CD8-positive, alpha-beta T cell (primary cell): ENCODE measurements at regions of chr14 and their contacts with region 1.

Region 1: GRCh38 chr14:60091550-60092530 is at the start of gene PCNX4:
- DNase-seq: peak; percentile 88 to 99 (median 94)
- ATAC-seq: peak; percentile 91
- H3K4me3 ChIP-seq: peak within 1 kb of the TSS; percentile 68 to 82
- H3K4me3 Mint-ChIP-seq: peak within 1 kb of the TSS; percentile 94
- H3K27ac ChIP-seq: peak within 1 kb of the TSS; percentile 84 to 97
- H3K27ac Mint-ChIP-seq: peak within 1 kb of the TSS; percentile 99
- H3K4me1 ChIP-seq: peaks cover 24% of the 10 kb centered on the region
- H3K4me1 Mint-ChIP-seq: peaks cover 46% of the 10 kb centered on the region
- H3K27me3 ChIP-seq: no peaks in the 10 kb centered on the region
- H3K27me3 Mint-ChIP-seq: no peaks in the 10 kb centered on the region
- CTCF ChIP-seq: no peak
- total RNA-seq, gene PCNX4: 16.3 to 25.1 TPM

Region 2: DNA sequence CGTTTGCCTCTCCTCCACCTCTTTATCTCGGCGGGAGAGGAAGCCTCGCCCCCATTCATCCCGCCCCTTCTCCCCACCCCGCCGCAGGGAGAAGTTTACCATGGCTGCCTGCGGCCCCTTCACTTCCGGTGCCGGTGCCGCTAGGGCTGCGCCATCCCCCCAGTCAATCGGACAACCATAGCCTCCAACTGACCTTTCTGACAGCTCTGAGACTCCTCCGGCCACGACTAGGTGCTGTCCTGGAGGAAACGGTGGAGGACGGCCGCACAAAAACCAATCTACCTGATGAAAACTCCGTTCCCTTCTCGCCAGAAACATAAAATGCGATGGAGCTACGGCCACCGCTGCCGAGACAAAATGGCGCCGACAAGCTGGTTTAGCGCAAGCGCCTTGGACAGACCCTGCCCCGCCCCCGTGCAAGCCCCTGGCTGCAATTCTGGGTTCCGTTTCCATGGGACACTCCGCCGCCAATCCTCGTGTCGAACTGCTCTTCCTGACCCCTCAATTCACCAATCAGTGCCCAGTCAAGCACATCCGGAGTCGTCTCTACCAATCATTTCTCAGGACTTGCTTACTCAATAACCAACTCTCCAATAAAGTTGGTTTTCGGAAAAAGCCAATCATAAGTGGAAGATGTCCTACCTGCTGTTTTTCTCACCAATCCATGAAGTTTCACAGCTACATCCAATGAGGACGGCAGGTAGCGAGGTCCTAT is 1793.9 kb before region 1 on chr14:
- CTCF ChIA-PET with region 1: no interaction called
- POLR2A ChIA-PET with region 1: no interaction called
- intact Hi-C with region 1: loop called in 1 of 2 experiments (anchors 10 kb)
- DNase-seq: peak; percentile 96 to 100 (median 97)
- ATAC-seq: peak; percentile 85
- H3K4me3 ChIP-seq: peak overlapping the region; percentile 81 to 85
- H3K4me3 Mint-ChIP-seq: no peak overlapping the region
- H3K27ac ChIP-seq: peak overlapping the region; percentile 94 to 97
- H3K27ac Mint-ChIP-seq: no peak overlapping the region
- H3K4me1 ChIP-seq: peaks cover 40% of the 10 kb centered on the region
- H3K4me1 Mint-ChIP-seq: peaks cover 61% of the 10 kb centered on the region
- H3K27me3 ChIP-seq: no peaks in the 10 kb centered on the region
- H3K27me3 Mint-ChIP-seq: no peaks in the 10 kb centered on the region
- CTCF ChIP-seq: no peak

Region 3: DNA sequence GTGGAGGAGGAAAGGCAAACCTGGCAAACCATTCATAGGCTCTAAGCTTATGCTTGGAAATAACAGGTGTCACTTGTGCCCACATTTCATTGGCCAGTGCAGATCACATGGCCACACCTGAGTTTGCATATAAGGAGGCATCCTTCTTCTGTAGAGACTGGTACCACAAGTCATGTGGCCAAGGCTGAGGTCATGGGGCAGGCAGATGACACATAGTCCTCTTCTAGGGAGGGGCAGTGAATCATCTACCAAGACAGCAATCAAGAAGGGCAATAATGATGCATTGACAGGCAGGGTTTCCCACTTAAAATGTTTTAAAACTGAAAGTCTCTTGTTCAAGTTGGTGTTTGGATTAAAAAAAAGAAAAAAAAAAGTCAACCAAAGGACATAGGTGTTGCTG is 826.0 kb before region 1 on chr14:
- CTCF ChIA-PET with region 1: no interaction called
- POLR2A ChIA-PET with region 1: no interaction called
- intact Hi-C with region 1: no loop called
- DNase-seq: no peak
- ATAC-seq: no peak
- H3K4me3 ChIP-seq: no peak overlapping the region
- H3K4me3 Mint-ChIP-seq: no peak overlapping the region
- H3K27ac ChIP-seq: no peak overlapping the region
- H3K27ac Mint-ChIP-seq: no peak overlapping the region
- H3K4me1 ChIP-seq: no peaks in the 10 kb centered on the region
- H3K4me1 Mint-ChIP-seq: no peaks in the 10 kb centered on the region
- H3K27me3 ChIP-seq: no peaks in the 10 kb centered on the region
- H3K27me3 Mint-ChIP-seq: no peaks in the 10 kb centered on the region
- CTCF ChIP-seq: no peak

Region 4: DNA sequence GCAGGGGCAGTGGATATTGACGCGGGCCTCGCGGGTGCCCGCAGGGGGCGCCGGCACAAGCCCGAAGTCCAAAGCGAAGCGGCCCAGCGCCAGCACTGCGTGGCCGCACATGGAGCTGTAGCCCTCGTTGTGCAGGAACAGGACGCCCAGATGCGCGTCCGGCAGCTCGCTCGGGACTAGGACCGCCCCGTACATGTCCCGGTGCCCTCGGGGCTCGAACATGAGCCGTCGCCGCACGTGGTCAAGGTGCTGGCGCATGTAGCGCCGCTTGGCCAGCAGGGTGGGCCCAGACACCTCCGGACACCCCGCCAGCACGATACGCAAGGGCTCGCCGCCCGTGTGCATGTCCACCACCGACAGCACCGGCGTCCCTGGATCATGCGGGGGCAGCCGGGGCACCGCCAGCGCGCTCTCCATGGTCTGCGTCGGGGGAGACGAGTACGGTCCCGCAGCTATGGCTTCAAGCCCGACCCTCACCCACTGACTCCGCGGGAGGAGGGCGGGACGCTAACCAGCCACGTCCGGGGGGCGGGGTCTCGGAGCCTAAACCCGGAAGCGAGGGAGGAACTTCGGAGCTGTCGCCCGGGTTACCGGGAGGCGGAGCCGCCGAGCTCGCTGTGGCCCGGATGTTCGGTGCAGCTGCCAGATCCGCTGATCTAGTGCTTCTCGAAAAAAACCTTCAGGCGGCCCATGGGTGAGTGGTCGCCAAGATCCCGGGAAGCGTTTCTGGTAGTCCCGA is 607.8 kb before region 1 on chr14 and contains the starts of genes JKAMP and L3HYPDH:
- CTCF ChIA-PET with region 1: no interaction called
- POLR2A ChIA-PET with region 1: no interaction called
- intact Hi-C with region 1: loop called in 1 of 2 experiments (anchors 1 kb)
- DNase-seq: peak; percentile 93 to 99 (median 97)
- ATAC-seq: peak; percentile 95
- H3K4me3 ChIP-seq: peak within 1 kb of the TSS; percentile 94 to 99
- H3K4me3 Mint-ChIP-seq: peak within 1 kb of the TSS; percentile 96
- H3K27ac ChIP-seq: peak within 1 kb of the TSS; percentile 77 to 89
- H3K27ac Mint-ChIP-seq: peak within 1 kb of the TSS; percentile 88
- H3K4me1 ChIP-seq: peaks cover 46% of the 10 kb centered on the region
- H3K4me1 Mint-ChIP-seq: peaks cover 76% of the 10 kb centered on the region
- H3K27me3 ChIP-seq: no peaks in the 10 kb centered on the region
- H3K27me3 Mint-ChIP-seq: no peaks in the 10 kb centered on the region
- CTCF ChIP-seq: no peak
- total RNA-seq, gene JKAMP: 9.1 to 10.5 TPM
- total RNA-seq, gene L3HYPDH: 8.4 to 8.7 TPM

Region 5: GRCh38 chr14:60079724-60080123 is 12.1 kb before region 1 on chr14:
- CTCF ChIA-PET with region 1: no interaction called
- POLR2A ChIA-PET with region 1: no interaction called
- intact Hi-C with region 1: no loop called
- DNase-seq: no peak
- ATAC-seq: no peak
- H3K4me3 ChIP-seq: no peak overlapping the region
- H3K4me3 Mint-ChIP-seq: no peak overlapping the region
- H3K27ac ChIP-seq: no peak overlapping the region
- H3K27ac Mint-ChIP-seq: no peak overlapping the region
- H3K4me1 ChIP-seq: no peaks in the 10 kb centered on the region
- H3K4me1 Mint-ChIP-seq: peaks cover 3% of the 10 kb centered on the region
- H3K27me3 ChIP-seq: no peaks in the 10 kb centered on the region
- H3K27me3 Mint-ChIP-seq: no peaks in the 10 kb centered on the region
- CTCF ChIP-seq: no peak

Region 6: DNA sequence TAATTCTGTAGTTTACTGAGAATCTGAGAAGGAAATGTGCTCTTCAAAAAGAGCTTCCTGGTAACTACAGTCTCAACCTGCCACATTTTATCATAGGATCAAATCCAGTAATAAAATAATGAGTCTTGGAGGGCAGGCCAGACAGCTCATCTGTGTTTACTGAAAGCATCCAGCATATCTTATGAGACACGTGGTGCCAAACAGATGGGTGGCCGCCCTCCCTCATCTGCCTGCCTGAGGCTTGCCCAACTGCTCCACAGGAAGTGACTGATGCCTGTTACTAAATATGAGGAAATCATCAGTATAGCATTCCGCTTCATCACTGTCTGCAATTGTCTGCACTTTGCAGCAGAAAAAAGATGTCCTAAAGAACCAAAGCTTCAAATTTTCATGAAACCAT is 59.9 kb after region 1 on chr14:
- CTCF ChIA-PET with region 1: interaction called, 3 read pairs
- POLR2A ChIA-PET with region 1: interaction called, 7 read pairs
- intact Hi-C with region 1: loop called in 1 of 2 experiments (anchors 2 kb)
- DNase-seq: peak; percentile 31 to 87 (median 74)
- ATAC-seq: peak; percentile 97
- H3K4me3 ChIP-seq: no peak overlapping the region
- H3K4me3 Mint-ChIP-seq: no peak overlapping the region
- H3K27ac ChIP-seq: peak overlapping the region; percentile 28 to 87
- H3K27ac Mint-ChIP-seq: peak overlapping the region; percentile 93
- H3K4me1 ChIP-seq: peaks cover 39% of the 10 kb centered on the region
- H3K4me1 Mint-ChIP-seq: peaks cover 54% of the 10 kb centered on the region
- H3K27me3 ChIP-seq: no peaks in the 10 kb centered on the region
- H3K27me3 Mint-ChIP-seq: no peaks in the 10 kb centered on the region
- CTCF ChIP-seq: no peak

Region 7: DNA sequence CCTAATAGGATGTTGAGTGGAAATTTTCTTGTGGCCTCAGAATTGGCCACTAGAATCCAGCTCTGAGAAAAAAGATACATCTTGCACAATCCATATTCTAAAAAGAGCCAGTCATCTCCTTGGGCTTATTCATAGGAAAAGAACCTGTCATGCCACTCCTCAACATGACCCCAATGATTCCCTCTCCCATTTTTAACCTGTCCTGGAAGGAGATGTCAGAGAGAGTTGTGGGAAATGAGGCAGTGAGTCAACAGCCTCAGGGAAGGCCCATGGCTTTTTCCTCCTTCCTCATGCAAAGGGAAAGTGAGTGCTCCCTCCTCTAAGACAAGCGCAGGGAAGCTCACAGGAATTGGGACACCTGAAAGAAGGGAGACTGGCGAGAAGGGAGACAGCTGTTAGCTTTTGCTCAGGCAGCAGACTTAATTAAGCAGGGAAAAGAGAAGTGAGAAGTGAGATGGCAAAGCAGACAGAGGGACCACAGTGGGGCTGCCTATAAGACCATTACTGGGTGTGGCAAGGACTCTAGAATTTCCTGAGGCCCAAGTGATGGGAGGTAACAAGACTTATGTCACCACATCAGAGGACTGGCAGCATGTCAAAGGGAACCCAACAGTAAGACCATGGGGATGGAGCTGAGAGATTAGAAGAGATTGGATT is 83.5 kb after region 1 on chr14:
- CTCF ChIA-PET with region 1: no interaction called
- POLR2A ChIA-PET with region 1: no interaction called
- intact Hi-C with region 1: no loop called
- DNase-seq: no peak
- ATAC-seq: no peak
- H3K4me3 ChIP-seq: no peak overlapping the region
- H3K4me3 Mint-ChIP-seq: no peak overlapping the region
- H3K27ac ChIP-seq: no peak overlapping the region
- H3K27ac Mint-ChIP-seq: no peak overlapping the region
- H3K4me1 ChIP-seq: no peaks in the 10 kb centered on the region
- H3K4me1 Mint-ChIP-seq: no peaks in the 10 kb centered on the region
- H3K27me3 ChIP-seq: peaks cover 0 to 2% of the 10 kb centered on the region in 2 experiments
- H3K27me3 Mint-ChIP-seq: peaks cover 6% of the 10 kb centered on the region
- CTCF ChIP-seq: no peak

Region 8: DNA sequence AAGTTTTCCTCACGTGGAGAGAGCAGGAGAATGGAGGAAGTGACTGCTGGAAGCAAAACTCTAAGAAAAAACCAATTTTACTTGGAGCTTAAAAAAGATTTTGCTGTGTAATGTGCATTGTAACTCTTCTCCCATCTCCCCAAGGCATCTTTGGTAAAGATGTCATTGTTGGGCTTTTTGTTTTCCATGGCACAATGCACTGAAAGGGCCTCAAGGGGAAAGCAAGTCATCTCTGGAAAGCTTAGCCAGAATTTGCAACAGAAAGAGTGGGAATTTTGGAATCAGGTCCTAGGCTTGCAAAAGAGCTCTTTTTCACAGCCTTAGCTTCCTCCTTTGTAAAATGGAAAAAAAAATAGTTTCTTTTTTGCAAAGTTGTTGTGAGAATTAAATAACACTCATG is 149.3 kb after region 1 on chr14:
- CTCF ChIA-PET with region 1: no interaction called
- POLR2A ChIA-PET with region 1: no interaction called
- intact Hi-C with region 1: no loop called
- DNase-seq: no peak
- ATAC-seq: no peak
- H3K4me3 ChIP-seq: no peak overlapping the region
- H3K4me3 Mint-ChIP-seq: no peak overlapping the region
- H3K27ac ChIP-seq: no peak overlapping the region
- H3K27ac Mint-ChIP-seq: no peak overlapping the region
- H3K4me1 ChIP-seq: no peaks in the 10 kb centered on the region
- H3K4me1 Mint-ChIP-seq: peaks cover 5% of the 10 kb centered on the region
- H3K27me3 ChIP-seq: no peaks in the 10 kb centered on the region
- H3K27me3 Mint-ChIP-seq: no peaks in the 10 kb centered on the region
- CTCF ChIP-seq: no peak

Region 9: GRCh38 chr14:60331201-60332045 is 239.6 kb after region 1 on chr14:
- CTCF ChIA-PET with region 1: no interaction called
- POLR2A ChIA-PET with region 1: no interaction called
- intact Hi-C with region 1: loop called in 1 of 2 experiments (anchors 10 kb)
- DNase-seq: peak; percentile 51 to 86 (median 80)
- ATAC-seq: peak; percentile 80
- H3K4me3 ChIP-seq: peak overlapping the region; percentile 52 to 55
- H3K4me3 Mint-ChIP-seq: peak overlapping the region; percentile 98
- H3K27ac ChIP-seq: peak overlapping the region; percentile 36 to 47
- H3K27ac Mint-ChIP-seq: peak overlapping the region; percentile 94
- H3K4me1 ChIP-seq: peaks cover 9% of the 10 kb centered on the region
- H3K4me1 Mint-ChIP-seq: peaks cover 33% of the 10 kb centered on the region
- H3K27me3 ChIP-seq: no peaks in the 10 kb centered on the region
- H3K27me3 Mint-ChIP-seq: peaks cover 30% of the 10 kb centered on the region
- CTCF ChIP-seq: peak; percentile 87

Region 10: DNA sequence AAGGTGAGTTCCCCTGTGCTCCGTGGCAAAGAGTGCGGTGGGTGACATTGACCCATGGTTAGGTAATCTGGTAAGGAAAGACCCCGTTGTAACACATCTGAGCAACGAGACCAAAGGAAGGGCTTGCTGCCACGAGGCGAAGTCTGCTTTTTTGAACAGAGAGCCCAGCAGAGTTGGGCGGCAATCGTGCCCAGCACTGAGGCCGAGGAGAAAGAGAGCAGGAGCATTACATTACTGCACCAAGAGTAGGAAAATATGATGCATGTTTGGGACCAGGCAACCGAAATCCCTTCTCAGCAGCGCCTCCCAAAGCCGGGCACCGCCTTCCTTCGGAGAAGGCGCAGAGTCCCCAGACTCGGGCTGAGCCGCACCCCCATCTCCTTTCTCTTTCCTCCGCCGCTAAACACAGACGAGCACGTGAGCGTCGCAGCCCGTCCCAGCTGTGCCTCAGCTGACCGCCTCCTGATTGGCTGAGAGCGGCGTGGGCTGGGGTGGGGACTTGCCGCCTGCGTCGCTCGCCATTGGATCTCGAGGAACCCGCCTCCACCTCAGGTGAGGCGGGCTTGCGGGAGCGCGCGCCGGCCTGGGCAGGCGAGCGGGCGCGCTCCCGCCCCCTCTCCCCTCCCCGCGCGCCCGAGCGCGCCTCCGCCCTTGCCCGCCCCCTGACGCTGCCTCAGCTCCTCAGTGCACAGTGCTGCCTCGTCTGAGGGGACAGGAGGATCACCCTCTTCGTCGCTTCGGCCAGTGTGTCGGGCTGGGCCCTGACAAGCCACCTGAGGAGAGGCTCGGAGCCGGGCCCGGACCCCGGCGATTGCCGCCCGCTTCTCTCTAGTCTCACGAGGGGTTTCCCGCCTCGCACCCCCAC is 1603.2 kb after region 1 on chr14 and contains the start of gene HIF1A:
- CTCF ChIA-PET with region 1: no interaction called
- POLR2A ChIA-PET with region 1: no interaction called
- intact Hi-C with region 1: loop called (anchors 2 to 5 kb)
- DNase-seq: peak; percentile 88 to 100 (median 94)
- ATAC-seq: peak; percentile 95
- H3K4me3 ChIP-seq: peak within 1 kb of the TSS; percentile 76 to 87
- H3K4me3 Mint-ChIP-seq: peak within 1 kb of the TSS; percentile 95
- H3K27ac ChIP-seq: peak within 1 kb of the TSS; percentile 83 to 86
- H3K27ac Mint-ChIP-seq: peak within 1 kb of the TSS; percentile 96
- H3K4me1 ChIP-seq: peaks cover 47% of the 10 kb centered on the region
- H3K4me1 Mint-ChIP-seq: peaks cover 59% of the 10 kb centered on the region
- H3K27me3 ChIP-seq: no peaks in the 10 kb centered on the region
- H3K27me3 Mint-ChIP-seq: no peaks in the 10 kb centered on the region
- CTCF ChIP-seq: no peak
- total RNA-seq, gene HIF1A: 335 to 340 TPM